ENCODE measurements at regions of chr13 and their contacts with region 1.

Region 1: GRCh38 chr13:25574437-25575411 is 202.9 kb downstream of the ATP8A2 start:
- DNase-seq: peak; percentile 61
- H3K4me3 ChIP-seq: peak overlapping the region in 1 of 2 experiments; percentile 47; a peak in 1 of 4 replicates
- H3K27ac ChIP-seq: no peak overlapping the region
- H3K4me1 ChIP-seq: no peaks in the 10 kb centered on the region
- H3K27me3 ChIP-seq: no peaks in the 10 kb centered on the region
- CTCF ChIP-seq: peak; percentile 83
- EP300 ChIP-seq: no peak
- RAD21 ChIP-seq: peak; percentile 99

Region 2: DNA sequence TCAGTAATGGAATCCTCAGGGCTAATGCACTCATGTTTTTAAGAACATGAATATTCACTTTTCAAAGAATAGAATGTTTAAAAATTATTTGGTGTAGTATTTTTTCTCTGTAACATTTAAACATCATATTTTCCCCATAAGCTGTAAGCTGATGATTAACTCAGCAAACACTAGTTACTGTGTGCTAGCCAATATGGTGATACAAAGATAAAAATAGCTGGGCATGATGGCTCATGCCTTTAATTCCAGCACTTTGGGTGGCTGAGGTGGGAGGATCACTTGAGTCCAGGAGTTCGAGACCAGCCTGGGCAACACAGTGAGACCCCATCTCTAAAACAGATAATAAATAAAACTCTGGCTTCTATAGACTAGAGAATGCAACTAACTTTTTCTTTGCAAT is 797.6 kb before region 1 on chr13:
- CTCF ChIA-PET with region 1: no interaction called
- POLR2A ChIA-PET with region 1: no interaction called
- DNase-seq: no peak
- H3K4me3 ChIP-seq: no peak overlapping the region
- H3K27ac ChIP-seq: no peak overlapping the region
- H3K4me1 ChIP-seq: no peaks in the 10 kb centered on the region
- H3K27me3 ChIP-seq: peaks cover 5% of the 10 kb centered on the region; the same call in 1 of the 2 replicates
- CTCF ChIP-seq: no peak
- EP300 ChIP-seq: no peak
- RAD21 ChIP-seq: no peak

Region 3: GRCh38 chr13:25585000-25585399 is 10.3 kb after region 1 on chr13:
- CTCF ChIA-PET with region 1: interaction called, 36 read pairs
- POLR2A ChIA-PET with region 1: no interaction called
- DNase-seq: no peak
- H3K4me3 ChIP-seq: no peak overlapping the region
- H3K27ac ChIP-seq: no peak overlapping the region
- H3K4me1 ChIP-seq: no peaks in the 10 kb centered on the region
- H3K27me3 ChIP-seq: no peaks in the 10 kb centered on the region
- CTCF ChIP-seq: no peak
- EP300 ChIP-seq: no peak
- RAD21 ChIP-seq: no peak

Region 4: DNA sequence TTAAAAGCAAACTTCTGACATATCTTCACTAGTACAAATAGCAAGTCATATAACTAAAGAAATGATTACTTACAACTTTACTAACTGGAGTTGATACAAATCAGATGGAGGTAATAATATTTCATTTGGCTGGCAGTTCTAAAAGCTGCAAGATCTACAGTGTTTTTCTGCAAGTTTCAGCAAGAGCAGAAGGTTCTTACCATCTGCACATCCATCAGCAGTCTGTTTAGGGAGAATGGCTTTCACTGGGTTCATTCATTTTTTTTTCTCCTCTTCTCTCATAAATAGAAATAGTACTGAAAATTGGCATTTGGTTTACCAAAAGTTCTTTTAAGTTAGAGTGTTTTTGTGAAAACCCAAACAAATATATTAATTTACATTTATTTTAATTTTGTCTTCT is 480.2 kb after region 1 on chr13:
- CTCF ChIA-PET with region 1: interaction called, 28 read pairs
- POLR2A ChIA-PET with region 1: no interaction called
- DNase-seq: no peak
- H3K4me3 ChIP-seq: no peak overlapping the region
- H3K27ac ChIP-seq: no peak overlapping the region
- H3K4me1 ChIP-seq: no peaks in the 10 kb centered on the region; a peak in 1 of 4 replicates
- H3K27me3 ChIP-seq: peaks cover 28% of the 10 kb centered on the region
- CTCF ChIP-seq: no peak
- EP300 ChIP-seq: no peak
- RAD21 ChIP-seq: no peak

Region 5: DNA sequence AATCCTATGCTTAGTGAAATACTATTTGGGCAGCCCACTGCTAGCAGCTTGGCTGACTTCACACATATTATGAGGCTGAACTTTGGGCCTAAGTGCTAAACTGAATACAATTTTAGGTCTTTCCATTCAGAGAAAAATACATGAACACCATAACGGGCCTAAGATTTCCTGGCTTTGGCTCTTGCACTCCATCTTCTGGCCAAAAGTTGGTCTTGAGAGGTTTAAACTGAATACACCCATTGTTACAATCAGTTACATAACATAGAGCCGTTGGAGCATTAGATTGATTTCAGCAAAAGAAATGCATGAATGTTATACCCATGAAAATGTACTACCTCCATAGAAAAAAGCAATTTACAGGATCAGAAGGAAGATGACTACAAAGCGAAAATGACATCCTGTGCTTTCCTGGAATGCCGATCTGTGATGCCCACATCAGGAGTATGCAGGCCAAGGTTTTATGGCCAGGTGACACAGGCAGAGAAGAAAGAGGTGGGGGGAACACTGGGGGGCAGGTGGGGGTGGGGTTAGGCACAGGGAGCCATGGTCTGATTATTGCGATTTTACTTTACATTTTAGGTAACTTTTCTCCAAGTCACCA is 488.2 kb after region 1 on chr13:
- CTCF ChIA-PET with region 1: interaction called, 97 read pairs
- POLR2A ChIA-PET with region 1: no interaction called
- DNase-seq: peak; percentile 47
- H3K4me3 ChIP-seq: no peak overlapping the region; a peak in 1 of 4 replicates
- H3K27ac ChIP-seq: no peak overlapping the region
- H3K4me1 ChIP-seq: no peaks in the 10 kb centered on the region
- H3K27me3 ChIP-seq: no peaks in the 10 kb centered on the region
- CTCF ChIP-seq: peak; percentile 62
- EP300 ChIP-seq: no peak
- RAD21 ChIP-seq: peak; percentile 90

Region 6: DNA sequence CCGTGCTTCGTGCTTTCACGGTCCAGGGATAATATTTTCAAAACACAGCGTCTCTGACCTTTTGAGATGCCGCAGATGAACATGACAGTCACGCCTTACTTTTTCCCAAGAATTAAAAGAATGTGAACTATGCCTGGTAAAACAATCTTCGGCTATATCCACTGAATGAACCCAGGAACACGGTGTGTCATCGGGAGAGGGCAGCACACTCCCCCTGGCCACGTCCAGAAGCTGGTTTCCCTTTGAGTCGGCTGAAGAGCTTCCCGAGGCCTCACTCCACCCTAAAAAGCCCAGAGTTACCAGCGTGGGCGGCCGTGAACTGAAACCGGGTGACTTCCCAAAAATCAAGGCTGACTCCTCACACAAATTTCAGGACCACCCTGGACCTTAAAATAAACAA is 500.0 kb after region 1 on chr13:
- CTCF ChIA-PET with region 1: interaction called, 97 read pairs
- POLR2A ChIA-PET with region 1: no interaction called
- DNase-seq: no peak
- H3K4me3 ChIP-seq: no peak overlapping the region
- H3K27ac ChIP-seq: no peak overlapping the region
- H3K4me1 ChIP-seq: no peaks in the 10 kb centered on the region
- H3K27me3 ChIP-seq: no peaks in the 10 kb centered on the region
- CTCF ChIP-seq: no peak
- EP300 ChIP-seq: no peak
- RAD21 ChIP-seq: no peak